WTC11 (cell line): ENCODE measurements at regions of chr5 and their contacts with region 1.

Region 1: GRCh38 chr5:10635867-10636350 is 72.0 kb downstream of the ANKRD33B start:
- DNase-seq: no peak
- ATAC-seq: no peak
- H3K4me3 Mint-ChIP-seq: no peak overlapping the region
- H3K27ac Mint-ChIP-seq: no peak overlapping the region
- H3K4me1 Mint-ChIP-seq: peaks cover 57% of the 10 kb centered on the region
- H3K27me3 Mint-ChIP-seq: peaks cover 3% of the 10 kb centered on the region; the same call in 1 of the 2 replicates
- CTCF ChIP-seq: no peak

Region 2: GRCh38 chr5:10452768-10453331 is 183.1 kb before region 1 on chr5:
- CTCF ChIA-PET with region 1: interaction called, 11 read pairs
- POLR2A ChIA-PET with region 1: no interaction called
- DNase-seq: no peak
- ATAC-seq: peak; percentile 75
- H3K4me3 Mint-ChIP-seq: no peak overlapping the region
- H3K27ac Mint-ChIP-seq: no peak overlapping the region
- H3K4me1 Mint-ChIP-seq: peaks cover 30% of the 10 kb centered on the region
- H3K27me3 Mint-ChIP-seq: no peaks in the 10 kb centered on the region
- CTCF ChIP-seq: no peak

Region 3: GRCh38 chr5:10649666-10650380 is 13.9 kb after region 1 on chr5:
- CTCF ChIA-PET with region 1: no interaction called
- POLR2A ChIA-PET with region 1: no interaction called
- DNase-seq: peak; percentile 61
- ATAC-seq: peak; percentile 56
- H3K4me3 Mint-ChIP-seq: no peak overlapping the region
- H3K27ac Mint-ChIP-seq: no peak overlapping the region
- H3K4me1 Mint-ChIP-seq: no peaks in the 10 kb centered on the region
- H3K27me3 Mint-ChIP-seq: no peaks in the 10 kb centered on the region
- CTCF ChIP-seq: no peak